SK-N-SH (cell line): ENCODE measurements at regions of chr15 and their contacts with region 1.

Region 1: GRCh38 chr15:95259513-95259912 is 1028.2 kb downstream of the MCTP2 start:
- DNase-seq: peak; percentile 27
- H3K4me3 ChIP-seq: peak overlapping the region in 1 of 2 experiments; percentile 19; a peak in 1 of 4 replicates
- H3K27ac ChIP-seq: no peak overlapping the region
- H3K4me1 ChIP-seq: no peaks in the 10 kb centered on the region; a peak in 1 of 4 replicates
- H3K27me3 ChIP-seq: no peaks in the 10 kb centered on the region
- CTCF ChIP-seq: peak; percentile 75
- EP300 ChIP-seq: no peak
- RAD21 ChIP-seq: peak; percentile 74

Region 2: DNA sequence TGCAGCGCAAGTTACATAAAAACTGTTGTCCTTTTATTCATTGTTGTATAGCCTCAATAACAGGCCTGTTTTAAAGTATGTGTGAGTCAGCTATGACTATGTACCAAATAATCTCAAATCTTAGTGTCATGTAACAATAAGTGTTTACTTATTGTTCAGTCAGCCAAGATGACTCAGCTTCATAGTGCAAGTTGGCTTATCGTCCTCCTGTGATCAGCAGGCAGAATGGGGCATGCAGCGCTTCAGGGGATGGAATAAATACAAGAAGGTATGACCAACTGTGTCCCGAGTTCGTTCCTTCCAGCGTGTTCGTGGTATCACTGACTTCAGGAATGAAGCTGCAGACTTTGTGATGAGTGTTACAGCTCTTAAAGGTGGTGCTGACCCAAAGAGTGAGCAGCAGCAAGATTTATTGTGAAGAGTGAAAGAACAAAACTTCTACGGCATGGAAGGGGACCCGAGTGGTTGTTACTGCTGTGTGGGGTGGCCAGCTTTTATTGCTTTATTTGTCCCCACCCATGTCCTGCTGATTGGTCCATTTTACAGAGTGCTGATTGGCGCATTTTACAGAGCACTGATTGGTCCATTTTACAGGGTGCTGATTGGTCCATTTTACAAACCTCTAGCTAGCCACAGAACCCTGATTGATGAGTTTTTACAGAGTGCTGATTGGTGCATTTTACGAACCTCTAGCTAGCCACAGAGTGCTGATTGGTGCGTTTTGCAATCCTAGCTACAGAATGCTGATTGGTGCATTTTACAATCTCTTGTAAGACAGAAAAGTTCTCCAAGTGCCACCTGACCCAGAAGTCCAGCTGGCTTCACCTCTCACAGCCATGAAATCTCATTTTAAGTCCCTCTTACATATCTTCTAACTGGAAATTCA is 12.2 kb before region 1 on chr15:
- CTCF ChIA-PET with region 1: interaction called, 26 read pairs
- POLR2A ChIA-PET with region 1: no interaction called
- DNase-seq: no peak
- H3K4me3 ChIP-seq: no peak overlapping the region
- H3K27ac ChIP-seq: no peak overlapping the region
- H3K4me1 ChIP-seq: no peaks in the 10 kb centered on the region
- H3K27me3 ChIP-seq: no peaks in the 10 kb centered on the region
- CTCF ChIP-seq: no peak
- EP300 ChIP-seq: no peak
- RAD21 ChIP-seq: no peak

Region 3: GRCh38 chr15:95291898-95292472 is 32.5 kb after region 1 on chr15:
- CTCF ChIA-PET with region 1: interaction called, 15 read pairs
- POLR2A ChIA-PET with region 1: no interaction called
- DNase-seq: peak; percentile 38
- H3K4me3 ChIP-seq: no peak overlapping the region; a peak in 1 of 4 replicates
- H3K27ac ChIP-seq: no peak overlapping the region
- H3K4me1 ChIP-seq: no peaks in the 10 kb centered on the region; a peak in 1 of 4 replicates
- H3K27me3 ChIP-seq: no peaks in the 10 kb centered on the region
- CTCF ChIP-seq: peak; percentile 63
- EP300 ChIP-seq: no peak
- RAD21 ChIP-seq: peak; percentile 55

Region 4: GRCh38 chr15:97234851-97235610 is 1975.5 kb after region 1 on chr15:
- CTCF ChIA-PET with region 1: interaction called, 11 read pairs
- POLR2A ChIA-PET with region 1: no interaction called
- DNase-seq: peak; percentile 47
- H3K4me3 ChIP-seq: no peak overlapping the region; a peak in 1 of 4 replicates
- H3K27ac ChIP-seq: no peak overlapping the region
- H3K4me1 ChIP-seq: peaks cover 0 to 8% of the 10 kb centered on the region in 2 experiments; a peak in 1 of 4 replicates
- H3K27me3 ChIP-seq: no peaks in the 10 kb centered on the region
- CTCF ChIP-seq: peak; percentile 90
- EP300 ChIP-seq: no peak
- RAD21 ChIP-seq: peak; percentile 78